Psoas muscle (tissue), 8 donors: ENCODE measurements at regions of chr1 and their contacts with region 1.

Region 1: GRCh38 chr1:117045644-117046043 is 14.5 kb upstream of the TTF2 start:
- DNase-seq: no peak
- ATAC-seq: no peak
- H3K4me3 ChIP-seq: no peak overlapping the region
- H3K27ac ChIP-seq: no peak overlapping the region
- H3K4me1 ChIP-seq: no peaks in the 10 kb centered on the region
- H3K27me3 ChIP-seq: no peaks in the 10 kb centered on the region
- CTCF ChIP-seq: no peak

Region 2: GRCh38 chr1:116151739-116152576 is 893.7 kb before region 1 on chr1:
- intact Hi-C with region 1: loop called in 1 of 2 experiments (anchors 10 kb)
- DNase-seq: peak; percentile 81 to 84
- ATAC-seq: peak; percentile 95 to 100 (median 97)
- H3K4me3 ChIP-seq: peak overlapping the region; percentile 61
- H3K27ac ChIP-seq: peak overlapping the region; percentile 9
- H3K4me1 ChIP-seq: peaks cover 12% of the 10 kb centered on the region
- H3K27me3 ChIP-seq: no peaks in the 10 kb centered on the region
- CTCF ChIP-seq: peak; percentile 96